ENCODE measurements at regions of chr1 and their contacts with region 1.

Region 1: GRCh38 chr1:89524369-89525168 is at the start of gene LRRC8B:
- DNase-seq: peak; percentile 84 to 91
- H3K4me3 ChIP-seq: peak within 1 kb of the TSS; percentile 77
- H3K27ac ChIP-seq: peak within 1 kb of the TSS; percentile 92
- H3K4me1 ChIP-seq: peaks cover 36% of the 10 kb centered on the region
- H3K27me3 ChIP-seq: no peaks in the 10 kb centered on the region
- CTCF ChIP-seq: no peak
- total RNA-seq, gene LRRC8B: 11.7 and 15.0 TPM in 2 replicates

Region 2: DNA sequence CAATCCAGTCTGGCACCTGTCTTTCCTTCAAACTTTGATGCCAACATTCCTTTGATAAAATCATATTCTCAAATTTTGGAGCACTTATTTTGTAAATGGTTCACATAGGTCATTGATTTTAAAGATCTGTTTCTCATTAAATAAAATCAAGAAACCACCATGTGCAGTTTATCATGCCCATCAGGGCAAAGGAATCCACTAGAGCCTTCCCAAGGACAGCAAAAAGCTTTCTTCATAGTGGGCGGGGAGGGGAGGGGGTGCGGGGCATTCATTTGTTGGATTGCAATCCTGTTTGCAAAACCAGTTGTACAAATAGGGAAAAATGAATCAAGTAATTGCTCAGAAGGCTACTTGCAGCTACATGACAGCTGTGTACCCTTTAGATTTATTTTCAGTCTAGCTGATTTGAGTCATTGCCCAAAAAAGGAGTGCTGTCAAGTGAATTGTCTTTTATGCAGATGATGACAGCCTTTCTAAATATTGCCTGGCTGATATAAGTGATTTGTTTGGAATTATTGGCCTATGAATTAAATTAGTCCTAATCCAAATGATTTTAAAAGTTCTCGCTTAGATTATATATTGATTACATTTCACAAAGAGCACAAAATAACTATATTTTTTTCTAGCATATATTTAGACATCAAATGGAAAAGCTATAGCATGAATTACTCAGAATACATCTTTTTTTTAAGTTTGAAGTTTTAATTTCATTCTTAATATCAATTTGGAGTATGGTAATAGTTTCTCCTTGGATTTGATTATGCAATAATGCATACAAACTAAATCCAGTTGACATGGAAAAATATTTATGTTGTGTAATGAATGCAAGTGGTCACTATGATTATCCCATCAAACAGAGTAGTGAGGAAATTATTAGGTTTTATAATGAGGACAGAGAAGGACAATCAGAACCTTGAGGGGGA is 23.3 kb after region 1 on chr1:
- CTCF ChIA-PET with region 1: no interaction called
- POLR2A ChIA-PET with region 1: no interaction called
- intact Hi-C with region 1: loop called (anchors 2 kb)
- DNase-seq: peak; percentile 6 to 90
- H3K4me3 ChIP-seq: no peak overlapping the region
- H3K27ac ChIP-seq: peak overlapping the region; percentile 70
- H3K4me1 ChIP-seq: peaks cover 45% of the 10 kb centered on the region
- H3K27me3 ChIP-seq: no peaks in the 10 kb centered on the region
- CTCF ChIP-seq: no peak

Region 3: GRCh38 chr1:89605692-89606091 is 81.1 kb after region 1 on chr1:
- CTCF ChIA-PET with region 1: no interaction called
- POLR2A ChIA-PET with region 1: no interaction called
- intact Hi-C with region 1: loop called (anchors 5 kb)
- DNase-seq: peak; percentile 81 to 94
- H3K4me3 ChIP-seq: no peak overlapping the region
- H3K27ac ChIP-seq: no peak overlapping the region
- H3K4me1 ChIP-seq: peaks cover 20% of the 10 kb centered on the region
- H3K27me3 ChIP-seq: no peaks in the 10 kb centered on the region
- CTCF ChIP-seq: no peak

Measured in PC-9 (cell line).